Natural killer cell (primary cell): ENCODE measurements at regions of chr4 and their contacts with region 1.

Region 1: GRCh38 chr4:81040012-81040659 is 9.6 kb downstream of the BMP3 start:
- DNase-seq: peak in 1 of 2 donors; percentile 65
- ATAC-seq: peak in 1 of 3 donors; percentile 54
- H3K4me3 ChIP-seq: no peak overlapping the region
- H3K4me3 Mint-ChIP-seq: no peak overlapping the region
- H3K27ac ChIP-seq: no peak overlapping the region
- H3K27ac Mint-ChIP-seq: no peak overlapping the region
- H3K4me1 ChIP-seq: no peaks in the 10 kb centered on the region
- H3K4me1 Mint-ChIP-seq: no peaks in the 10 kb centered on the region
- H3K27me3 ChIP-seq: peaks cover 2% of the 10 kb centered on the region
- H3K27me3 Mint-ChIP-seq: peaks cover 8 to 26% of the 10 kb centered on the region in 2 donors
- CTCF ChIP-seq: peak; percentile 70

Region 2: DNA sequence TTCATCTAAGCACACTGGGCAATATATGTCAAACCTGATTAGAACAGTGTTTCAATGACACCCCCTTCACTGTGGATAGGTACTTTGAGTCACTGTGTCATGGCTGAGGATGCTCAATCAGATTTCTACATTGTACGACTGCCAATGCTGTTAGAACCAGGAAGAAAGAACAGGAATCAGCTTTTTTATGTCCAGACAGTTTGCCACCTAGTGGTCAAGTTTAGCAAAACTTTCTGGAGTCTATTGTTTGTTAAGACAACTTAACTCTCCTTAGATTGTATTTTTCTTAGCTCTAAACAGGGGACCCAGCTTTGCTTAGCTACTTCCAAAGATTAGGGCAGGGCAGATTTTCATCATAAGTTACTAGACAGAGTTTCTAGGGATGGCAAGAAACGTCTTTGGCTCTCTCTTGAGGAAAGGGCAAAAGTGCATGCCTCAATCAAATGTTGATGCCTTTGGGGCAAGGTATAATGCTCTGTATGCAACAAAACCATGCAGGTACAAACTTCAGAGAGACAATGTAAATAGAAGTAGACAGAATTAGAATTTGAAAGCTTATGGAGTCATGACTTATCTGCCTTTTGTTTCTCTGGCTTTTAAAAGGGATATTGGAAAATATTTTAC is 50.1 kb before region 1 on chr4:
- intact Hi-C with region 1: loop called (anchors 5 kb)
- DNase-seq: peak in 1 of 2 donors; percentile 72
- ATAC-seq: peak in 2 of 3 donors; percentile 34 to 51
- H3K4me3 ChIP-seq: no peak overlapping the region
- H3K4me3 Mint-ChIP-seq: no peak overlapping the region
- H3K27ac ChIP-seq: no peak overlapping the region
- H3K27ac Mint-ChIP-seq: no peak overlapping the region
- H3K4me1 ChIP-seq: no peaks in the 10 kb centered on the region
- H3K4me1 Mint-ChIP-seq: peaks cover 5 to 7% of the 10 kb centered on the region in 2 donors
- H3K27me3 ChIP-seq: no peaks in the 10 kb centered on the region
- H3K27me3 Mint-ChIP-seq: peaks cover 0 to 5% of the 10 kb centered on the region in 2 donors
- CTCF ChIP-seq: peak; percentile 78

Region 3: GRCh38 chr4:81471588-81472288 is 431.6 kb after region 1 on chr4 and contains the start of gene RASGEF1B:
- intact Hi-C with region 1: no loop called
- DNase-seq: peak; percentile 96
- ATAC-seq: peak; percentile 85 to 96 (median 89)
- H3K4me3 ChIP-seq: peak within 1 kb of the TSS; percentile 97
- H3K4me3 Mint-ChIP-seq: peak within 1 kb of the TSS; percentile 97
- H3K27ac ChIP-seq: peak within 1 kb of the TSS; percentile 99
- H3K27ac Mint-ChIP-seq: peak within 1 kb of the TSS; percentile 82 to 98
- H3K4me1 ChIP-seq: peaks cover 25% of the 10 kb centered on the region
- H3K4me1 Mint-ChIP-seq: peaks cover 46 to 50% of the 10 kb centered on the region in 2 donors
- H3K27me3 ChIP-seq: no peaks in the 10 kb centered on the region
- H3K27me3 Mint-ChIP-seq: no peaks in the 10 kb centered on the region
- CTCF ChIP-seq: no peak
- total RNA-seq, gene RASGEF1B: 42.9 to 106 (median 90.8) TPM